ENCODE measurements at regions of chr19 and their contacts with region 1.

Region 1: DNA sequence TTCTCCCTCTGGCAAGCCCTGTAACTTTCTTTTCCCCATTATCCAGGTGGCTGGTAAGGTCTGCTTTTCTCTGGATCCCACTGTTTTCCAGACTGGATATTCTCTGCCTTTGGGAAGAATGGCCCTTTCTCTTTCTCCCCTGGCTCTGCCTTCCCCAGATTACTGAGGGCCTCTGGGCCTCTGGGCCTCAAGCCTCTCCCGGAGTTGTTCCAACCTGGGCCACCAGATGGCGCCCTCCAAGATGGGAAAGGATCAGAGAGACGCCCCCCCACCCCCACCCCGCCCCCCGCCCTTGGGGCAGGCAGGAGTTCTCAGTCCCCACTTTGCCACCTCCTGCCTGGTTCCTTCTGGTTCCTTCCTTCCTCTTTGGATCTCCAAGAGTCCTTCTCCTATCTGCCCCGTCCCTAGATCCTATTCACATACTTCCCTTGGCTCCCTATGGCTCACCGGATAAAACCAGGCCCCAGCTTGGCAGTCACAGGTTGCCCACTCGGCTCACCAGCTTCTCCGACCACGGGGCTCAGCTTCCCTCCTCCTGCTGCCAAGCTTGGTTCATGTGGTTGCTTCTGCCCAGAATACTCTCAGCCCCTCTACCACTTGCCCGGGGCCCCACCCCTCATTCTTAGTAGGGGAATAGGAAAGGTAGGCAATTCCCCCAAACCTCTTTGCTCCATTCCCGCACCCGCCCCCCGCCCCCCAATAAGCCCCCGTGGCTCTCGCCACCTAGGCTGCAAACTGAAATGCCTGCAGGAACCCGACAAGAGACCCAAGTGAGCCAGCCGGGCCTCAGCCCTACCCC is 13.1 kb downstream of the EPS8L1 start:
- DNase-seq: peak; percentile 97
- ATAC-seq: no peak
- H3K4me3 Mint-ChIP-seq: peak overlapping the region; percentile 88
- H3K27ac Mint-ChIP-seq: peak overlapping the region; percentile 76
- H3K4me1 Mint-ChIP-seq: peaks cover 43% of the 10 kb centered on the region
- H3K27me3 Mint-ChIP-seq: peaks cover 38% of the 10 kb centered on the region
- CTCF ChIP-seq: peak; percentile 95

Region 2: DNA sequence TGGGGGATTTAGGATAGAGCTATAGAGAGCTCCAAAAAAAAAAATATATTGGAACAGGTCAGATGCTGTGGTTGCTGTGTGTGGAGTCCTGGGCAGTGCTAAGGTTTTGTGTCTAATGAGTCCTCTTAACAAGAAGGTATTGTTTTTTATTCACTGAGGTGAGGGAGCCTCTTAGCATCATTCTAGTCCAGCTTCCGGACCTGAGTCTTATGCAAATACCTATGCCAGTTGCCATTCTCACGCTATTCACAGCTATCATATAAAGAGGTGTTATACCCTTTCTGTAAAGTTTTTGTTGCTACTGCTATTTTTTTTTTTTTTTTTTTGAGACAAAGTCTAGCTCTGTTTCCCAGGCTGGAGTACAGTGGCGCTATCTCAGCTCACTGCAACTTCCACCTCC is 121.1 kb before region 1 on chr19:
- CTCF ChIA-PET with region 1: no interaction called
- POLR2A ChIA-PET with region 1: no interaction called
- DNase-seq: no peak
- ATAC-seq: no peak
- H3K4me3 Mint-ChIP-seq: no peak overlapping the region
- H3K27ac Mint-ChIP-seq: no peak overlapping the region
- H3K4me1 Mint-ChIP-seq: no peaks in the 10 kb centered on the region
- H3K27me3 Mint-ChIP-seq: no peaks in the 10 kb centered on the region; the same call in 1 of the 2 replicates
- CTCF ChIP-seq: no peak

Region 3: DNA sequence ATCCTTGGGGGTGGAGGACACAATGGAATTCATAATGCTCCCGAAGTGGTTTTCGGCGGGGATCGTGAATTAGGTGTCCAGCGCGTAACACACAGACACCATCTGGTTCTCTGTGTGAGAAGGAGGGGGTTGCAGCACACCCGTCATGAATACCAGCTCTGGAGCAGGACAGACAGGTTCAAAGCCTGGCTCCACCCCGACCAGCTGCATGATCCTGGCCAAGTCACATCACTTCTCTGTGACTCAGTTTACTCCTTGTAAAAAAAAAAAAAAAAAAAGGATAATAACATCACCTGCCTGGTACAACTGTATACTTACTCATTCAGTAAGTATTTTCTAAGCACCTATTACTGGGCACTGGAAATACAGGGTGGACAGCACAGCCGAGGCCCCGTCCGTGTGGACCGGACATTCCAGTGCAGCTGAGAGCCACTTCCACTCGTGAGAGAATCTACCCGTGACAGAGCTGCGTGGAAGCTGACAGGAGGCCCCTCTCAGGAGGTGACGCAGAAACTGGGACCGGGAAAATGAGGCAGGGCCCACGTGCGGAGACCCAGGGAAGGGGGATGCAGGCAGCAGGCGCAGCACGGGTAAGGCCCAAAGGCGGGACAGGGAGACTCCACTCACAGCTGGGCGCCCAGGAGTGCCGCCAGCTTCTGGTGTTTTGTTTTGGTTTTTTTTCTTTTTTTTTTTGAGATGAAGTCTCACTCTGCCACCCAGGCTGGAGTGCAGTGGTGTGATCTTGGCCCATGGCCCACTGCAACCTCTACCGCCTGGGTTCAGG is 37.8 kb before region 1 on chr19:
- CTCF ChIA-PET with region 1: no interaction called
- POLR2A ChIA-PET with region 1: no interaction called
- DNase-seq: no peak
- ATAC-seq: no peak
- H3K4me3 Mint-ChIP-seq: no peak overlapping the region
- H3K27ac Mint-ChIP-seq: no peak overlapping the region
- H3K4me1 Mint-ChIP-seq: no peaks in the 10 kb centered on the region
- H3K27me3 Mint-ChIP-seq: no peaks in the 10 kb centered on the region
- CTCF ChIP-seq: no peak

Region 4: GRCh38 chr19:55062734-55063492 is 25.8 kb before region 1 on chr19 and contains the start of gene RDH13:
- CTCF ChIA-PET with region 1: interaction called, 25 read pairs
- POLR2A ChIA-PET with region 1: interaction called, 6 read pairs
- DNase-seq: peak; percentile 99
- ATAC-seq: peak; percentile 98
- H3K4me3 Mint-ChIP-seq: peak within 1 kb of the TSS; percentile 97
- H3K27ac Mint-ChIP-seq: no peak within 1 kb of the TSS
- H3K4me1 Mint-ChIP-seq: peaks cover 17% of the 10 kb centered on the region
- H3K27me3 Mint-ChIP-seq: peaks cover 46% of the 10 kb centered on the region
- CTCF ChIP-seq: no peak
- total RNA-seq, gene RDH13: 35.3 to 39.5 TPM (median 38.4 TPM) in 3 replicates

Region 5: DNA sequence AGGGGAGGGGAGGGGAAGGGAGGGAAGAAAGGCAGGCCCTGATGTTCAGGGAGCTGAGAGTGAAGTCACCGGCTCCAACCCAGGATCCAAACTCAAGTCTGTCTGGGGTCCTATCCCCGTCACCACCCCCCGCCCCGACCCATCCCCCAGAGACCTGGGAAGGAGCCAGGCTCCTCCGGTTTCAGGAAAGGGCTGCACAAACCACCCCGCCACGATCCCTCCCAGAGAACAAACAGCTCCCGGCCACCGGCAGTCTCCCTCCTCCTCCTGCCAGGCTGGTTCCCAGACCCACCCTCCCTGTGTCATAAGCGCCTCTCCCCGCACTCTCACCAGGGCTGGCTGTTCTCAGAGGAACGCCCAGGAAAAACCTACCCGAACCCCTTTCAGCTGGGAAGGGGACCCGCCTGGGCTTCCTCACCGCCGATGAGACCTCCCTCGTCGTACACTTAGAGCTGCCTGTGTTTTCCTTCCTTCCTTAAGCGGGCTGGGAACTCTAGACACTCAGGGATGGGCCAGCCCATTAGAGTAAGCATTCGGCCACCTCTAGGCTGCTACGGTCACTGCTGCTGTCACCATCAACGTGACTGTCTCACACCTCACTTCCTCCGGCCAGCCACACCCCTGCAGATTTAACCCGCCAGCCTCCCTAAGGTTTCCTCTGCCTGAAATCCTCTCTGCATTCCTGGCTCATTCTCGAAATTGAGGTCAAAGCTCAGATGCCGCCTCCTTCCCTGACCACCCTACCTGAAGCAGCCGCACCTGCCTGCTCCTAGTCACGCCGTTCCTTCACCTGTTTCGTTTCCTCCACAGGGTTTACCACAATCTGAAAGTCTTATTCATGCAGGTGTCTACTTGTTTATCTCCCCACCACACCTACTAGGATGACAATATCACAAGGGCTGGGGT is 19.5 kb before region 1 on chr19:
- CTCF ChIA-PET with region 1: interaction called, 25 read pairs
- POLR2A ChIA-PET with region 1: interaction called, 3 read pairs
- DNase-seq: peak; percentile 50
- ATAC-seq: peak; percentile 84
- H3K4me3 Mint-ChIP-seq: peak overlapping the region; percentile 79
- H3K27ac Mint-ChIP-seq: peak overlapping the region; percentile 82
- H3K4me1 Mint-ChIP-seq: peaks cover 34% of the 10 kb centered on the region
- H3K27me3 Mint-ChIP-seq: peaks cover 96% of the 10 kb centered on the region
- CTCF ChIP-seq: no peak

Region 6: DNA sequence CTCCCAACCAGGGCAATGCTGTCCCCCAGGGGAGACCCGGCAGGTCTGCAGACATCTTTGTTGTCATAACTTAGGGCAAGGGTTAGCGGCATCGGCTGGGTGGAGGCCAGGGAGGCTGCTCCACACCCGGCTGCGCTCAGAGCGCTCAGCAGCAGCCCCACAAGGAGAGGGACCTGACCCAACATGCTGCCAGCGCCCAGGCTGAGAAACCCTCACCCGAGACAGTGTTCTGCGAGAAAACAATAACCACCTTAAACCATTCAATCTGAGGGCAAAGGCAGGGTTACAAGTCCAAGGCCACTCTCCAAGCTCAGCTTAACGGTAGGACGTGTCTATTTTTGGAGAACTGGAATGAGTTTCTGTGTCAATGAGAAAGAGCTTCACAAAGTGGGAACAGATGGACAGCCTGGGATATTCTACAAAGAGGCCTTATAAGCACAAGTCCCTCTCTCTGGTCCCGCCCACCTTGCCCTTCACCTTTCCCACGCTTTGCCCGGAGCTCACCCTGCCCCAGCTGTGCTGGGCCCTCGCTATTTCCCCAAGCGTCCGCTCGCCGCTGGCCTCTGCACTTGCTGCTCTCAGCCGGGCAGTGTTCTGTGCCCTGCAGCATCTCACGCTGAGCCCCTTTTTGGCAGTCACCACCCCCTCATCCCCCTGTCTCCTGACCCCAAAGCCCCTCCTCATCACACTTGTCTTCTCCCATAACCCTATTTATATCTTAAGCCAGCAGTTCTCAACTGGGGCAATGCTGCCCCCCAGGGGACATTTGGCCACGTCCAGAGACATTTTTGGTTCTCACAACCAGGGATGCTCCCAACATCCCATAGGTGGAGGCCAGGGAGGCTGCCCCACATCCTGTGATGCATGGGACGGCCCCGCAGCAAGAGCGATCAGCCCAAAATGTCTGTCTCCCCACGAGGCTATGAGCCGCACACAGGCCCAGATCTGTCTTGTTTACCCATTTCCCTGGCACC is 11.1 kb after region 1 on chr19:
- CTCF ChIA-PET with region 1: interaction called, 27 read pairs
- POLR2A ChIA-PET with region 1: no interaction called
- DNase-seq: peak; percentile 73
- ATAC-seq: peak; percentile 36
- H3K4me3 Mint-ChIP-seq: no peak overlapping the region
- H3K27ac Mint-ChIP-seq: 0 out of 2 replicates have a peak overlapping the region, but pooled peaks have one; percentile 87
- H3K4me1 Mint-ChIP-seq: peaks cover 10% of the 10 kb centered on the region
- H3K27me3 Mint-ChIP-seq: no peaks in the 10 kb centered on the region; the same call in 1 of the 2 replicates
- CTCF ChIP-seq: no peak

Region 7: GRCh38 chr19:55117636-55118391 is 29.1 kb after region 1 on chr19 and contains the start of gene PPP1R12C:
- CTCF ChIA-PET with region 1: interaction called, 11 read pairs
- POLR2A ChIA-PET with region 1: interaction called, 7 read pairs
- DNase-seq: peak; percentile 98
- ATAC-seq: peak; percentile 78
- H3K4me3 Mint-ChIP-seq: peak within 1 kb of the TSS; percentile 98
- H3K27ac Mint-ChIP-seq: peak within 1 kb of the TSS; percentile 97
- H3K4me1 Mint-ChIP-seq: peaks cover 31% of the 10 kb centered on the region
- H3K27me3 Mint-ChIP-seq: peaks cover 21% of the 10 kb centered on the region
- CTCF ChIP-seq: no peak
- total RNA-seq, gene PPP1R12C: 88.4 to 99.3 TPM (median 92.3 TPM) in 3 replicates

Region 8: GRCh38 chr19:55132453-55133129 is 43.8 kb after region 1 on chr19:
- CTCF ChIA-PET with region 1: interaction called, 17 read pairs
- POLR2A ChIA-PET with region 1: no interaction called
- DNase-seq: no peak
- ATAC-seq: peak; percentile 66
- H3K4me3 Mint-ChIP-seq: no peak overlapping the region
- H3K27ac Mint-ChIP-seq: 0 out of 2 replicates have a peak overlapping the region, but pooled peaks have one; percentile 22
- H3K4me1 Mint-ChIP-seq: peaks cover 23% of the 10 kb centered on the region
- H3K27me3 Mint-ChIP-seq: peaks cover 4% of the 10 kb centered on the region
- CTCF ChIP-seq: no peak

Measured in WTC11 (cell line).